ENCODE measurements at regions of chr2 and their contacts with region 1.

Region 1: GRCh38 chr2:120693121-120693520 is 42.5 kb upstream of the GLI2 start:
- DNase-seq: no peak
- H3K4me3 ChIP-seq: no peak overlapping the region
- H3K27ac ChIP-seq: no peak overlapping the region
- H3K4me1 ChIP-seq: peaks cover 4 to 7% (median 6%) of the 10 kb centered on the region in 4 experiments; a peak in 6 of 7 replicates
- H3K27me3 ChIP-seq: peaks cover 0 to 21% (median 18%) of the 10 kb centered on the region in 4 experiments; a peak in 5 of 7 replicates
- CTCF ChIP-seq: no peak
- EP300 ChIP-seq: no peak
- POLR2A ChIP-seq: no peak
- RAD21 ChIP-seq: no peak

Region 2: DNA sequence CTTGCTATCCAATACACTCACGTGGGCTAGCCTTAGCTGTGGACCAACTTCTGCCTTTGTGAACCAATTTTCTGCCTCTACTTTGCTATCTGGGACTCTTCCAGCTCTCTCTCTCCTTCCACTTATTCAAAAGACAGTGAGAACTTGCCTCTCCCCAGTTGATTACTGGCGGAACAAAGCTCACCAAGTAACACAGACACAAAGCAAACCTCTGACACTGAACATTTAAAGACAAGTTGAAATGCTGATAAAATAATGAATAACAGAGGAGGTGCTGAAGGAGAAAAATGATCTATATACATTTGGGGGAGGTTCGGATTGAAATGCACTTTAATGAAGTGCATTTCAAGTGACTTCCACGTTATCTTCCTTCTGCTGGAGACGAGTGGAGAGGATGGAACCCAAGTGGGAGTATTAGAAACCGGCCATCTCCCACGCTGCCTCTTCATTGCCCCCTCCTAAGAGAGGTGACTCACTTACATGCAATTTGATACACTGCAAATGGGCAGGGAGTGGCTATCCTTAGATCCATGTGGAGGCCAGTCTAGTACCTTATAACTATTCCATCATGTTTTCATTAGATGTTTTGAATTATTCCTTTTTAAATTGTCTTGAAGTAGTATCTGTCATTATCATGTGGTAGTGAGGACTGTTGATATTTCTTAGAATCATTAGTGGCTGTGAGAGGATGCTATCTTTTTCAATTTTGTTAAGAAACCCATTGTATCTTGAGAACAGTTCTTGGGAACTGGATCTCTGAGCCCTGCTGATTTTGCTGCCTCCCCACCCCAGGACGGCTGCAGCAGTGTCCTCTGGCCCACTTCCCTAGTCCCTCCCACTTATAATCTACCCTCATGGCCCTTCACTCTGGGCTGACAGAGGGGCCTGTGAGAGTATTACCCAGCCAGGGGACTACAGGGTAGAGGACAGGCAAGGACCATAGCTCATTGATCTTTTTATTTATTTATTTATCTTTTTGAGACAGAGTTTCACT is 36.6 kb after region 1 on chr2:
- CTCF ChIA-PET with region 1: interaction called, 20 read pairs
- POLR2A ChIA-PET with region 1: interaction called, 4 read pairs
- DNase-seq: no peak
- H3K4me3 ChIP-seq: no peak overlapping the region
- H3K27ac ChIP-seq: no peak overlapping the region
- H3K4me1 ChIP-seq: peaks cover 0 to 6% (median 1%) of the 10 kb centered on the region in 4 experiments; a peak in 4 of 7 replicates
- H3K27me3 ChIP-seq: no peaks in the 10 kb centered on the region; a peak in 1 of 7 replicates
- CTCF ChIP-seq: no peak
- EP300 ChIP-seq: no peak
- POLR2A ChIP-seq: no peak
- RAD21 ChIP-seq: no peak

Region 3: DNA sequence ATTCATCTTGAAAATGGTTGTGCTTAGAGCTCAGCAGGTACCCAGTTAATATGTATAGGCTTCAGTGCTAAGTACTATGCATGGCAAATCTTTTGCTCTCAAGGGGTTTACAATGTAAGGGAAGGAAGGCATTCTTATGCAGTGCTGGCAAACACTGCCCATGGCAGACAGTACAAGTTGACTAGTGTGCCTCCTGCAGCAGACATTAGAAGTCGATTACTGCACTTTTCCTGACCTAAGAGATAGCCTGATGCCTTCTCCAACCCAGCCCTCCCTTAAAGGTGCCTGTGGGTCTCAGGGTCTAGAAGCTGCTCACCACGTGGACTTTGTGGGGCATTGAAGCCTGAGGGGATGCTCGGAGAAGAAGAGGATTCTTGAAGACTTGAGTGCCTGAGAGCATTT is 93.4 kb after region 1 on chr2:
- CTCF ChIA-PET with region 1: interaction called, 14 read pairs
- POLR2A ChIA-PET with region 1: no interaction called
- DNase-seq: peak; percentile 60 to 64
- H3K4me3 ChIP-seq: 0 out of 8 replicates have a peak overlapping the region, but pooled peaks of 1 of the 4 experiments have one; percentile 13
- H3K27ac ChIP-seq: no peak overlapping the region; the same call in 1 of the 2 replicates
- H3K4me1 ChIP-seq: peaks cover 15 to 64% (median 51%) of the 10 kb centered on the region in 4 experiments
- H3K27me3 ChIP-seq: no peaks in the 10 kb centered on the region
- CTCF ChIP-seq: no peak
- EP300 ChIP-seq: peak in 1 of 2 experiments; percentile 59; a peak in 1 of 3 replicates
- POLR2A ChIP-seq: no peak
- RAD21 ChIP-seq: no peak; a peak in 1 of 4 replicates

Region 4: GRCh38 chr2:120867290-120868241 is 174.4 kb after region 1 on chr2:
- CTCF ChIA-PET with region 1: interaction called, 11 read pairs
- POLR2A ChIA-PET with region 1: no interaction called
- DNase-seq: peak in 1 of 2 experiments; percentile 78
- H3K4me3 ChIP-seq: peak overlapping the region in 2 of 4 experiments; percentile 6 to 42; a peak in 4 of 8 replicates
- H3K27ac ChIP-seq: no peak overlapping the region
- H3K4me1 ChIP-seq: peaks cover 9 to 40% (median 18%) of the 10 kb centered on the region in 4 experiments
- H3K27me3 ChIP-seq: peaks cover 0 to 4% (median 0%) of the 10 kb centered on the region in 4 experiments; a peak in 1 of 7 replicates
- CTCF ChIP-seq: no peak
- EP300 ChIP-seq: no peak
- POLR2A ChIP-seq: no peak
- RAD21 ChIP-seq: no peak

Region 5: DNA sequence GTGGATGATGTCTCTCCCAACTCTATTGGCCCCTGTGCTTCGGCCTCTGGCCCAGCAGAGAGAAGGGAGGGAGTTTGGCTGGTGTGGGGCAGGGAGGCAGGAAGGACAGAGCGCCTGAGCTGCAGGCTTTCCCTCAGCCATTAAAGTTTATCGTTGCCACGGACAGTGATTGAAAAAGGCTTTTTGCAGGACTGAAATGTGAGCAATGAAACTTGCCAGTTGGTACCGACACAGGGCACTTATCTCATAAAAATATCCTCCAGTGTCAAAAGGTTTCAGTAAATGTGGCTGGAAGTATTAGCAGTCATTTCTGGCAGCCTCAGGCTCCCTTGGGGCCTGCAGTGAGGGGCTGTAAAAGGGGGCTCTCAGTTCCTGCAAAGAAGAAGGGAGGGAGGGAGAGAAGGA is 211.7 kb after region 1 on chr2:
- CTCF ChIA-PET with region 1: interaction called, 11 read pairs
- POLR2A ChIA-PET with region 1: interaction called, 3 read pairs
- DNase-seq: no peak
- H3K4me3 ChIP-seq: no peak overlapping the region
- H3K27ac ChIP-seq: no peak overlapping the region
- H3K4me1 ChIP-seq: peaks cover 0 to 17% (median 10%) of the 10 kb centered on the region in 4 experiments
- H3K27me3 ChIP-seq: no peaks in the 10 kb centered on the region
- CTCF ChIP-seq: no peak
- EP300 ChIP-seq: no peak
- POLR2A ChIP-seq: no peak
- RAD21 ChIP-seq: no peak

Region 6: DNA sequence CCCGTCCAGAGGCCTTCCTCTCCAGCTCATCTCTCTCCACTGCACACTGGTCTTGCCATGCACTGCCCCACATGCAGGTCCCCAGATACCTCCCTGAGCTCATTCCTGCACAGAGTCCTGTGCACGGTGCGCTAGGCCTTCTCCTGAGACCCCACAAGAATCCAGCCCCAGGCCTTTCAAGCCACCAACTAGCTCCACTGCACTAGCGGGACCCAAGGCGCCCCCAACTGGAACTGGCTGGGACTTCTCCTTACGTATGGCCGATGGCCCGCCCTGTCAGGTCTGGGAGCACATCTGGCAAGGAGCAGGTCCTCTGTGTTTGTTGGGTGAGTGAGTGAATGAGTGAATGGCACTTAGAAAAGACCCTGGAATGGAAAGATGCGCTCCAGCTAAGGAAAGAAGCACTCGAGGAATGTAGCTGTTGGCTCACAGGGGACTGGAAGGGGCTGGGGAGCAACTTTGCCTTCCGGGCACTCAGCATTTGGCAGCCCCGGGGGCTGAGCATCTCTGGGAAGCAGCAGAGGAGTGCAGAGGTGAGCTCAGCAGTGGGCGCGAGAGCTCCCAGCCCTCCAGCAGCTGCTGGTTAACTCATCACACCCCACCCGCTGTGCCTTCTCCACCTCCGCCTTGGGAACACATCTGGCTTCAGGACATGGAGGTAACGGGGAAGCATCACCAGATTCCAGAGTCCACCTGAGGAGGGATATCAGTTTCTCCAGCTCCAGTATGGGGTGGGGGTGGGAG is 265.7 kb after region 1 on chr2:
- CTCF ChIA-PET with region 1: interaction called, 41 read pairs
- POLR2A ChIA-PET with region 1: interaction called, 3 read pairs
- DNase-seq: peak; percentile 17 to 93
- H3K4me3 ChIP-seq: no peak overlapping the region
- H3K27ac ChIP-seq: no peak overlapping the region
- H3K4me1 ChIP-seq: no peaks in the 10 kb centered on the region
- H3K27me3 ChIP-seq: no peaks in the 10 kb centered on the region
- CTCF ChIP-seq: peak in 2 of 3 experiments; percentile 79 to 83; a peak in 3 of 4 replicates
- EP300 ChIP-seq: no peak
- POLR2A ChIP-seq: no peak
- RAD21 ChIP-seq: peak; percentile 78 to 86

Region 7: DNA sequence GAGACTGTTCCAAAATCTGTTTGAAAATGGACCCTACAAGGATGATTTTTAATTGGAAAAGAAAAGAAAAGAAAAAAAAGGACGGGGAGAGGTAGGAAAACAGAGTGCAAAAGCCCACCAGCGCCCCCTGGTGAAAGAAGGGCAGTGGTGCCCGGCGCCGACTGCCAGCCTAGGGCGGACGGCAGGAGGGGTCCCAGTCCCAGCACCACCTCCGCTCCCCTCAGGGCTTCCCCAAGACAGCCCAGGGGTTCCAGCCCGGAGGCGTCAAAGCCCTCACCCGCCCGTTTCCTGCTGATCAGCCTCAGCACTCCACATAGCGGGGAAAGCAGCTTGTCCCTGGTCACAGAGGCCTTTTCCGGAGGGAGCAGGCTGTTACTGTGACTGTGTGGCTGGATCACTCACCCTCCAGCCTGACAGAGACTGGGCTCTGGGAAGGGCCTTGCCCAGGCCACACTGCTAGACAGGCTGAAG is 377.9 kb after region 1 on chr2:
- CTCF ChIA-PET with region 1: interaction called, 88 read pairs
- POLR2A ChIA-PET with region 1: interaction called, 33 read pairs
- DNase-seq: peak in 1 of 2 experiments; percentile 98
- H3K4me3 ChIP-seq: no peak overlapping the region
- H3K27ac ChIP-seq: no peak overlapping the region
- H3K4me1 ChIP-seq: peaks cover 0 to 15% (median 13%) of the 10 kb centered on the region in 4 experiments; a peak in 6 of 7 replicates
- H3K27me3 ChIP-seq: peaks cover 0 to 7% (median 6%) of the 10 kb centered on the region in 4 experiments; a peak in 6 of 7 replicates
- CTCF ChIP-seq: peak in 2 of 3 experiments; percentile 78 to 84; a peak in 3 of 4 replicates
- EP300 ChIP-seq: no peak
- POLR2A ChIP-seq: no peak
- RAD21 ChIP-seq: peak; percentile 88 to 93

Measured in H1 (cell line).